Posterior vena cava (tissue), 2 donors: ENCODE measurements at regions of chr15 and their contacts with region 1.

Region 1: DNA sequence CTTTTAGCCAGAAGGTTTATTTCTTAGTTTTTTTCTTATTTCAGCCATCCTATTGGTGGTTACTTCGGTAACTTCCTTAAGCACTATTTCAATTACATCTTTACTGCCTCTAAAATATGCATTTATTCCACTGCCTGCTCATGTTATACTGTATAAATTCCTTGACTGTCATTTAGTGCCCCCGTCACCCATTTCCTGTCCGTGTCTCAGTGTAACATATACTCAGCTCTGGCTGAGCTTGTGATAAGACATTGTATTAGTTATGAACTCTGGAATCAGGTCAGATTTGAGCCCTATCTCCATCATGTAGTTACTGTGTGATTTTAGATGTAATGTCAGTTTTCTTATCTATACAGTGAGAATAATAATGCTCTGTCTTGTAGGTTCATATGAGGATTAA is 24.2 kb downstream of the PIAS1 start:
- DNase-seq: no peak

Region 2: GRCh38 chr15:67884514-67885487 is 193.6 kb before region 1 on chr15:
- intact Hi-C with region 1: no loop called
- DNase-seq: peak; percentile 94

Region 3: DNA sequence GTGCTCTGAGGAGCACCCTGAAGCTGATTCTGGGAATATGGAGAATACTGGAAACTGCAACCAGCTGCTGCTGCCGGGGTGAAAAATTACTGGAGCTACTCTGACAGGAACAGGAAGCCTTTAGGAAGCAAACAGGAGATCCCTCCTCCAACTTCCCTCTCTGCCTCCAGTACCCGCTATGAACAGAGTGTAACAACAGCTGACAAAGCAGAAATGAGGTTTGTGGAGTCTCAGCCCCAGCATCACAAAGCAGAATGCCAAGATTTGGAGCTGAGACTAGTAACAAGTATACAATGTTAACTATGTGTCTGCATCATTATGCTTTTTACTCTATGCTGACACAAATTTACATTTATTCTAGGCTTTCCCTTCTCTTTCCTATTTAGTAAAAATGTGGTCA is 47.0 kb before region 1 on chr15:
- intact Hi-C with region 1: no loop called
- DNase-seq: no peak

Region 4: DNA sequence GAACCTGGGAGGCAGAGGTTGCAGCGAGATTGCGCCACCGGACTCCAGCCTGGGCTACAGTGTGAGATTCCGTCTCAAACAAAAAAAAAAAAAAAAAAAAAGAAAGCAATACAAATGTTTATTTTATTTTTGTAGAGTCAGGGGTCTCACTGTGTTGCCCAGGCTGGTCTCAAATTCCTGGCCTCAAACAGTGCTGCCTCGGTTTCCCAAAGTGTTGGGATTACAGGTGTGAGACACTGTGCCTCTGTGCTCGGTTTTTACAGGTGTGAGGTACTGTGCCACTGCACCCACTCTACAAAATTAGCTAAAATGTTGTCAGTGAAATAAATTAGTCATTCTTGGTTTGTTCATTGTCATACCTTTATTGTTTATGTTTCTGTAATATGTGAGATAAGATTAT is 18.7 kb before region 1 on chr15:
- intact Hi-C with region 1: loop called in 1 of 2 experiments (anchors 1 kb)
- DNase-seq: no peak

Region 5: GRCh38 chr15:68709876-68710275 is 631.5 kb after region 1 on chr15:
- intact Hi-C with region 1: no loop called
- DNase-seq: no peak

Region 6: GRCh38 chr15:68844856-68845550 is 766.6 kb after region 1 on chr15:
- intact Hi-C with region 1: no loop called
- DNase-seq: no peak